ENCODE measurements at regions of chr1 and their contacts with region 1.

Region 1: GRCh38 chr1:157156058-157156541 is 17.9 kb upstream of the ETV3 start:
- DNase-seq: peak; percentile 78
- H3K4me3 ChIP-seq: no peak overlapping the region
- H3K27ac ChIP-seq: no peak overlapping the region
- H3K4me1 ChIP-seq: peaks cover 12% of the 10 kb centered on the region
- H3K27me3 ChIP-seq: peaks cover 7% of the 10 kb centered on the region
- CTCF ChIP-seq: peak; percentile 93

Region 2: GRCh38 chr1:157090196-157090647 is 65.9 kb before region 1 on chr1:
- intact Hi-C with region 1: loop called (anchors 1 kb)
- DNase-seq: peak; percentile 89
- H3K4me3 ChIP-seq: no peak overlapping the region
- H3K27ac ChIP-seq: no peak overlapping the region
- H3K4me1 ChIP-seq: no peaks in the 10 kb centered on the region
- H3K27me3 ChIP-seq: no peaks in the 10 kb centered on the region
- CTCF ChIP-seq: peak; percentile 96

Region 3: GRCh38 chr1:157399984-157400382 is 243.9 kb after region 1 on chr1:
- intact Hi-C with region 1: no loop called
- DNase-seq: no peak
- H3K4me3 ChIP-seq: no peak overlapping the region
- H3K27ac ChIP-seq: no peak overlapping the region
- H3K4me1 ChIP-seq: no peaks in the 10 kb centered on the region
- H3K27me3 ChIP-seq: no peaks in the 10 kb centered on the region
- CTCF ChIP-seq: no peak